Psoas muscle (tissue), 8 donors: ENCODE measurements at regions of chr3 and their contacts with region 1.

Region 1: DNA sequence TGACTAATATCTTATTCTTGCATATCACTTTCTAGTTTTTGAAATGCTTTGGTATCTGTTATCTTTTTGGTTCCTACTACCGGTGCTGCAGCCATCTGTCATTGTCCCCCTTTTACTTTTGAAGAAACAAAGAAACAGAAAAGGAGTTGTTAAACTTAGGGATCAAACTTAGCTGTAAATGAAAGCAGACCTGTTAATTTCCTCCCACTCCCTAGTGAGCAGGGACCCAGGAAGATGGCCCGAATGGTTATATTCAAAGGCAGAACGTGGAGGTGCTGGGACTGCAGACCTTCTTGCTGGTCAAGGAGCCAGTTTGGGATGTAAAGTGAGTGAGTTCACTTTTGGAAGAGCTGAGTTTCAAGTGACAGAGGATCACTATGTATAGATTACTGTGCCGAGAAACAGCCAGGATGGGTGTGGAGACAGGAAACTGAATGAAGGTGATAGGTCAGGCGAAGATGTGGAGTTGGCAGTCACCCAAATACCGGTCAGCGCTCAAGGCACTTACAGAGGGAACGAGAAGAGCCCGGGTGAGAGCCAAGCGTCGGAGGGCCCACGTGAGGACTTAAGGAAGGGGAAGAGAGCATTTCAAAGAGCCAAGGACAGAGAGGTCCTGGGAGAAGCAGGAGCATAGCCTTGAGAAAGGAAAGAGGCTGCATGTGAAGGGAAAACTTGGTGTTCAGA is 20.1 kb downstream of the KBTBD8 start:
- DNase-seq: no peak
- ATAC-seq: no peak
- H3K4me3 ChIP-seq: no peak overlapping the region
- H3K27ac ChIP-seq: no peak overlapping the region
- H3K4me1 ChIP-seq: no peaks in the 10 kb centered on the region
- H3K27me3 ChIP-seq: no peaks in the 10 kb centered on the region
- CTCF ChIP-seq: no peak

Region 2: GRCh38 chr3:66517241-66517640 is 501.0 kb before region 1 on chr3:
- intact Hi-C with region 1: no loop called
- DNase-seq: no peak
- ATAC-seq: no peak
- H3K4me3 ChIP-seq: no peak overlapping the region
- H3K27ac ChIP-seq: no peak overlapping the region
- H3K4me1 ChIP-seq: no peaks in the 10 kb centered on the region
- H3K27me3 ChIP-seq: no peaks in the 10 kb centered on the region
- CTCF ChIP-seq: no peak

Region 3: DNA sequence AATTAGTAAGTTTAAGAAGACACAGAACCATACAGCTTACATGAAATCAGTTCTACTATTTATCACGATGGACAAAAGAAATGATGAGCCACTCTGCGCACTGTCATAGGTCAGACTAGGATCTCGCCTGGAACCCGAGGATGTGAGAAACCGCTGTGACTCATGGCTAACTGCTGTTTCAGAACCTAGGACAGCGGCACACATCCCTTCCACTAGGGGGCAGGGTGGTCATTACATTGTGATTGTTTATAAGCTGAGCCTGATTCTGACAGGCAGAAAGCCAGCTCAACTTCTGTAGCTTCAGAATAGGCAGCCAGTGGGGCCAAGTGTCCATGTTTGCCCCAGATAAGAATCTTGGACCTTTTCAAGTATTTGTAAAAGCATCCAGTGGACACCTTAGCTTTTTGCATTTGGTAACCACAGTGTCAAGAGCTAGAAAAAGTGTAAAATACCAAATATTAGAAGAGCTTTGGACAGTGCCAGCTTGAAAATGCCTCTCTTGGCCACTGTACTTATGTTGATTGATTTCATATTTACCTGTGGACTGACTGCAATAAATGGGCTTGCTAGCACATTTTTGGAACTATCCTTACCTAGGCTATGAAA is 95.7 kb after region 1 on chr3:
- intact Hi-C with region 1: no loop called
- DNase-seq: peak; percentile 41 to 59
- ATAC-seq: peak; percentile 61 to 82 (median 69)
- H3K4me3 ChIP-seq: no peak overlapping the region
- H3K27ac ChIP-seq: no peak overlapping the region
- H3K4me1 ChIP-seq: no peaks in the 10 kb centered on the region
- H3K27me3 ChIP-seq: no peaks in the 10 kb centered on the region
- CTCF ChIP-seq: peak; percentile 71

Region 4: DNA sequence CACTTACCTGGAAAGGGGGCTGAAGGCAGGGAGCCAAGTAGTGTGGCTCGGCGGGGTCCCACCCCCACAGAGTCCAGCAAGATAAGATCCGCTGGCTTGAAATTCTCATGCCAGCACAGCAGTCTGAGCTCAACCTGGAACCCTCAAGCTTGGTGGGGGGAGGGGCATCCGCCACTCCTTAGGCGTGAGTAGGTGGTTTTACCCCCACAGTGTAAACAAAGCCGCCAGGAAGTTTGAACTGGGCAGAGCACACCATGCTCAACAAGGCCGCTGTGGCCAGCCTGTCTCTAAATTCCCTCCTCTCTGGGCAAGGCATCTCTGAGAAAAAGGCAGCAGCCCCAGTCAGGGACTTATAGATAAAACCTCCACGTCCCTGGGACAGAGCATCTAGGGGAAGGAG is 136.2 kb after region 1 on chr3:
- intact Hi-C with region 1: no loop called
- DNase-seq: no peak
- ATAC-seq: no peak
- H3K4me3 ChIP-seq: no peak overlapping the region
- H3K27ac ChIP-seq: no peak overlapping the region
- H3K4me1 ChIP-seq: no peaks in the 10 kb centered on the region
- H3K27me3 ChIP-seq: no peaks in the 10 kb centered on the region
- CTCF ChIP-seq: no peak

Region 5: GRCh38 chr3:67647390-67647878 is 629.2 kb after region 1 on chr3:
- intact Hi-C with region 1: loop called in 1 of 2 experiments (anchors 5 kb)
- DNase-seq: peak; percentile 29 to 63
- ATAC-seq: peak; percentile 80 to 94 (median 92)
- H3K4me3 ChIP-seq: no peak overlapping the region
- H3K27ac ChIP-seq: peak overlapping the region; percentile 18
- H3K4me1 ChIP-seq: peaks cover 38% of the 10 kb centered on the region
- H3K27me3 ChIP-seq: no peaks in the 10 kb centered on the region
- CTCF ChIP-seq: no peak